Right lobe of liver (tissue), 6 donors: ENCODE measurements at regions of chr7 and their contacts with region 1.

Region 1: GRCh38 chr7:35985126-35985754 is 167.8 kb upstream of the EEPD1 start:
- DNase-seq: peak; percentile 82 to 85 (median 83)
- ATAC-seq: peak; percentile 93 to 97 (median 97)
- H3K4me3 ChIP-seq: no peak overlapping the region
- H3K27ac ChIP-seq: no peak overlapping the region
- H3K4me1 ChIP-seq: peaks cover 0 to 8% (median 0%) of the 10 kb centered on the region in 4 donors
- H3K27me3 ChIP-seq: no peaks in the 10 kb centered on the region
- CTCF ChIP-seq: peak; percentile 89 to 96 (median 91)
- POLR2A ChIP-seq: no peak

Region 2: DNA sequence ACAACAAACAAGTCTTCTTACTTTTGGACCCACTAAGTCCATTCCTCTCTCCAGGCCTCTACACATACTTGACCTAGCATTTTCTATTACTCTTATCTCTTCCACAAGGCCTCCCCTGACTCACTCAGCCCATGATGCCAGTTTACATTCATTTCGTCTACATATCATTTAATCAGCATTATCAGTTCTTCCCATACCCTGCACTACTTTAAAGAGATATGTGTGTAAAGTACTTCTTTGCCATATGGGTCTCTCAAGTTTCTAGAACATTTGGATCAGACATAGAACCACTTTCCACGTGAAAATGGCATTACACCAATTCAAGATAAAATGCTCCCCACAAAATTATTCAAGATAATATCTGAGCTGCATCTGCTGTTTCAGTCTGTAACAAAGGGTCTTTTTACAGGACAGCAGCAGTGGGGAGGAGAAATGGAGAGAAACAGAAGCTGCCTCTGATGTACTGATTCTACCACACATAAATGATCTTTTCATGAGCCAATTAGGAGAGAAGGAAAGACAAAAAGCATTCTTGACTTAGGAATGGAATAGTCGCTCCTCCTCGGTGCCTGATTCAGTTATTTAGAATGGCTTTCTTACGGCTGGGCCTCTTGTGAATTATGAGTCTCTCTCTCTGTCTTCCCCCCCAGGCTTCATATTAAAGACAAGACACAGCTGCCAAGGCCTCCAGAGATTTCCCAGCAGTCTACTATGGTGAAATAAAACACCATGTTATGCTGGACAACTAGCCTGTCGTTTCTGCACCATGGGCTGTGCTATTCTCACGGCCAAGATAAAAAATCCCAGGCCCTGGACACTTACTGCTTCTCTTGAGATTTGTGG is 231.3 kb before region 1 on chr7:
- intact Hi-C with region 1: no loop called
- DNase-seq: no peak
- ATAC-seq: no peak
- H3K4me3 ChIP-seq: no peak overlapping the region
- H3K27ac ChIP-seq: no peak overlapping the region
- H3K4me1 ChIP-seq: peaks cover 0 to 25% (median 0%) of the 10 kb centered on the region in 4 donors
- H3K27me3 ChIP-seq: no peaks in the 10 kb centered on the region
- CTCF ChIP-seq: no peak
- POLR2A ChIP-seq: no peak

Region 3: GRCh38 chr7:35777121-35777520 is 208.1 kb before region 1 on chr7:
- intact Hi-C with region 1: no loop called
- DNase-seq: no peak
- ATAC-seq: no peak
- H3K4me3 ChIP-seq: no peak overlapping the region
- H3K27ac ChIP-seq: no peak overlapping the region
- H3K4me1 ChIP-seq: no peaks in the 10 kb centered on the region
- H3K27me3 ChIP-seq: no peaks in the 10 kb centered on the region
- CTCF ChIP-seq: no peak
- POLR2A ChIP-seq: no peak

Region 4: GRCh38 chr7:36291387-36292316 is 306.4 kb after region 1 on chr7:
- intact Hi-C with region 1: loop called in 1 of 2 experiments (anchors 5 kb)
- DNase-seq: peak; percentile 84 to 86 (median 85)
- ATAC-seq: peak; percentile 76 to 86 (median 82)
- H3K4me3 ChIP-seq: peak overlapping the region in 2 of 3 donors; percentile 15 to 25
- H3K27ac ChIP-seq: peak overlapping the region; percentile 64 to 94 (median 81)
- H3K4me1 ChIP-seq: peaks cover 0 to 30% (median 10%) of the 10 kb centered on the region in 4 donors
- H3K27me3 ChIP-seq: no peaks in the 10 kb centered on the region
- CTCF ChIP-seq: peak; percentile 96 to 99 (median 98)
- POLR2A ChIP-seq: no peak

Region 5: GRCh38 chr7:36312344-36313334 is 327.4 kb after region 1 on chr7:
- intact Hi-C with region 1: loop called (anchors 5 to 10 kb)
- DNase-seq: peak in 1 of 3 donors; percentile 40
- ATAC-seq: peak; percentile 63 to 90 (median 68)
- H3K4me3 ChIP-seq: no peak overlapping the region
- H3K27ac ChIP-seq: no peak overlapping the region
- H3K4me1 ChIP-seq: no peaks in the 10 kb centered on the region
- H3K27me3 ChIP-seq: no peaks in the 10 kb centered on the region
- CTCF ChIP-seq: peak; percentile 29 to 50 (median 34)
- POLR2A ChIP-seq: no peak